ENCODE measurements at regions of chr17 and their contacts with region 1.

Region 1: DNA sequence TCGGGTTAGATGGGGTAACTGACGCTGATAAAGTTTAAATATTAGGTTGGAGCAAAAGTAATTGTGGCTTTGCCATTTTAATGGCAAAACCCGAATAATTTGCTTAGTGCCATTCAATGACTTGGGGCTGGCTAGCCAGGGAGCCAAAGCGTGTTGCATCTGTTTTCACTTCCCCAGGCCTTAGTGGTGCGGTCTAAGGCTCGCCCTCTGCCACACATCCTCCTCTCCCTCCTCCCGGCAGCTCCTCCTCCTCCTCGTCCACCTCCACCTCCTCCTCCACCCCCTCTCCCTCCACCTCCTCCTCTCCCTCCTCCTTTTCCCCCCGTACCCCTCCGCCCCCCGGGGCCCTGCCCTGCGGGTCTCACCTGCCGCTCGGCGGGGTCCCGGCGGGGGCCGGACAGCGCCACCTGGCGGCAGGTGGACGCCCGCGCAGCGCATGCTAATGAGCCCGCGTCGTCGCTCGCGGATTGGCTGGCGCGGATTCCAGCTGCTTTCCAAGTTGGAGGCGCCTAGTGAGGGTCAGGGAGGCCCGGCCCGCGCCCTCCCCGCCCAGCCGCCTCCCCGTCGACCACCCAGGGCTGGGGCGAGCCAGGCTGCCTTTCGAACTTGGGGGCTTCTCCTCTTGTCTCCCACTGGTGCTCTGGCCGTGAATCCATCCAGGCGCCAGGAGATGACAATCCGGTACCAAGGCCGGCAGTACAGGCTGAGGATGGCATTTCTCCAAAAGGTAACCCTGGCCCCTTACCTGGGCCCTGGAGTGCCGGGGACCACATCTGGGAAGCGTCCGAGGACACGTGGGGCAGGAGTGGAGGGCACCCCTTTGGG is 36.6 kb upstream of the RGS9 start:
- DNase-seq: peak; percentile 73
- H3K4me3 Mint-ChIP-seq: peak overlapping the region; percentile 66
- H3K27ac Mint-ChIP-seq: peak overlapping the region; percentile 68
- H3K4me1 Mint-ChIP-seq: peaks cover 29% of the 10 kb centered on the region
- H3K27me3 Mint-ChIP-seq: no peaks in the 10 kb centered on the region
- CTCF ChIP-seq: peak; percentile 95

Region 2: DNA sequence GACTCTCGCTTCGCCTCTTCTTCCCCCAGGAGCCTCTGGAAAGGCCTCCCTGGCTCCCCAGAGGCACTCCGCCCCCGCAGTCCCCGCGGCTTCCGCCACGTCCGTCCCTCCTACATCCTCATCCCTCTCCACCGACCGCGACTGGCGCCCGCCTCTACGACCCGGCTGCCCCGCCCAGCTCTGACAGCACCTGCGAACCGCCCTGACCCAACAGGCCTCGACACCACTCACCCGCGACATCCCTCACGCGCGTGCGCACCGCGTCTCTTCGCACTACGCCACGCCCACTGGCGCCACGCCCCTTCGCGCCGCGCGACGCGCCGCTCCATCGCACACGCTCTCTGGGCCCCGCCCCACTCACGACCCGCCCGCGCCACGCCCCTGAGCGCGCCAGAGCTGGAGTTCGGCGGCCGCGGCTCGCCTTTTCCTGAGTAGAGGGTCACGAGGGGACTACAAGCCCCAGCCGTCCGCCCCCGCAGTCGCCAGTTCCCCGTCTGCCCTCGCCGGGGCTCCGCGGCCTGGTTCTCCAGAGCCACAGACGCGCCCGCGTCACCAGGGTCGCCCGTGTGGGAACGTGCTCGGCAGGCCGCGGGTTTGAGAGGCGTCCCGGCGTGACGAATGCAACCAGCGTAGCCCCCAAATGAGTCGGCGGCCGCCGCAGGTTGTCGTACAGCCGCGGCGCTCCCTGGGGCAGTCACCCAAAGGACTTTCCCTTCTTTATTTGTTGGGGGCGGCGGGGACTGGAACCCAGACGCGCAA is 125.0 kb before region 1 on chr17:
- CTCF ChIA-PET with region 1: interaction called, 9 read pairs
- POLR2A ChIA-PET with region 1: interaction called, 34 read pairs
- intact Hi-C with region 1: no loop called
- DNase-seq: peak; percentile 93
- H3K4me3 Mint-ChIP-seq: peak overlapping the region; percentile 100
- H3K27ac Mint-ChIP-seq: peak overlapping the region; percentile 99
- H3K4me1 Mint-ChIP-seq: peaks cover 21% of the 10 kb centered on the region
- H3K27me3 Mint-ChIP-seq: no peaks in the 10 kb centered on the region
- CTCF ChIP-seq: no peak

Region 3: DNA sequence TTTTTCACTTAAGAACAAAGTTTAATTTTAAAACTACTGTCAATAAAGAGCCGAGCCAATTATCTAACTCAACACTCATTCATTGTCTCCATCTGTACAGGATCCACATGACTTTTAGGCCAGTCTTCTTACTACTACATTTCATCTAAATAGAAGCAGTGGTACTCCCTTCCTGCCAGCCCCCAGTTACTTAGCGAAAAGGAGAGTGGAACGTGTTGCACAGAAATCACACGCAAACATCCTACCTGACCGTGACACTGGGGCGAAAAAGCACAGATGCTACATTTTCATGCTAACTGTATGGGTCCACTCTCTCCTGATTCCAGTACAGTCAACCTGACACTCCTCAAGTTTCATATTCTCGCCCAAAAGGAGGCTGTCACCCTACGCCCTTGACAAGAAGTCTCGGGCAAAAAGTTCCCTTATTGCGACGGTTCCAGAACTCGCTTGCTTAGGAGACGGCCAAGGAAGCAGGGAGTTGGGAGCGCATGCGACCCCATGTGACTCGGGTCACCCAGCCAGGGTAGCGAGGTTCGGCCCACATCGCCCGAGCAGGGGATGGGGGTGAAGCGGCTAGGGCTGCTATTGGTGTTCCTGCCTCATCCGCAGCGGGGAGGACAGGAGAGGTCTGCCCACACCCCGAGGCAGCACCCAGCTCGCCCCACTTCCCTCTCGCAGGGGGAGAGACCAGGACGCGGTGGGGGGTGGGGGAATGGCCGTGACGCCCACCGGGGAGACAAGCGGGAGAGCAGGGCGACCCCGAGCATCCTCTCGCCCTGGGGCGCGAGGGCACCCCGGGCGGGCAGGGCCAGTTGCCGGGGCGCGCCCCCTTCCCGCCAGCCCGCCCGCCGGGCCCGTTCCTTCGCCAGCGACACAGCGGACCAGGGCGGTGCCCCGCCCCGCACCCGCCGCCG is 44.9 kb before region 1 on chr17:
- CTCF ChIA-PET with region 1: interaction called, 6 read pairs
- POLR2A ChIA-PET with region 1: interaction called, 256 read pairs
- intact Hi-C with region 1: loop called (anchors 2 kb)
- DNase-seq: peak; percentile 55
- H3K4me3 Mint-ChIP-seq: peak overlapping the region; percentile 89
- H3K27ac Mint-ChIP-seq: peak overlapping the region; percentile 72
- H3K4me1 Mint-ChIP-seq: peaks cover 31% of the 10 kb centered on the region
- H3K27me3 Mint-ChIP-seq: no peaks in the 10 kb centered on the region
- CTCF ChIP-seq: no peak

Region 4: DNA sequence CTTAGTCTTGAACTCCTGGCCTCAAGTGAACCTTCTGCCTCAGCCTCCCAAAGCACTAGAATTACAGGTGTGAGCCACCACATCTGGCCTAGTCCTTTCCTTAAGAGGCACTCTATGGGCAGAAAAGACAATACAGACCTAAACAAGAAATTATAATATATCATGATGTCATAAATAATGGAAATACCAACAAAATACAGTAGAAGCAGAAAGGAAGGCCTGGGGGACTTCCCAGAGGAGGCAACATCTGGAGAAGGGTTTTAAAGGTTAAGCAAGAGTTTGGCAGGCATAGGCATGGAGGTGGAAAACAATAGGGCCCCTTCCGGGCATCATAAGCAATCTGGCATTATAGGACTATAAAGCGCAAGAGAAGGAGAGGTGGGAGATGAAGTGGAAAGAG is 19.1 kb before region 1 on chr17:
- CTCF ChIA-PET with region 1: interaction called, 18 read pairs
- POLR2A ChIA-PET with region 1: interaction called, 4 read pairs
- intact Hi-C with region 1: no loop called
- DNase-seq: no peak
- H3K4me3 Mint-ChIP-seq: no peak overlapping the region
- H3K27ac Mint-ChIP-seq: no peak overlapping the region
- H3K4me1 Mint-ChIP-seq: no peaks in the 10 kb centered on the region
- H3K27me3 Mint-ChIP-seq: peaks cover 19% of the 10 kb centered on the region
- CTCF ChIP-seq: no peak

Region 5: DNA sequence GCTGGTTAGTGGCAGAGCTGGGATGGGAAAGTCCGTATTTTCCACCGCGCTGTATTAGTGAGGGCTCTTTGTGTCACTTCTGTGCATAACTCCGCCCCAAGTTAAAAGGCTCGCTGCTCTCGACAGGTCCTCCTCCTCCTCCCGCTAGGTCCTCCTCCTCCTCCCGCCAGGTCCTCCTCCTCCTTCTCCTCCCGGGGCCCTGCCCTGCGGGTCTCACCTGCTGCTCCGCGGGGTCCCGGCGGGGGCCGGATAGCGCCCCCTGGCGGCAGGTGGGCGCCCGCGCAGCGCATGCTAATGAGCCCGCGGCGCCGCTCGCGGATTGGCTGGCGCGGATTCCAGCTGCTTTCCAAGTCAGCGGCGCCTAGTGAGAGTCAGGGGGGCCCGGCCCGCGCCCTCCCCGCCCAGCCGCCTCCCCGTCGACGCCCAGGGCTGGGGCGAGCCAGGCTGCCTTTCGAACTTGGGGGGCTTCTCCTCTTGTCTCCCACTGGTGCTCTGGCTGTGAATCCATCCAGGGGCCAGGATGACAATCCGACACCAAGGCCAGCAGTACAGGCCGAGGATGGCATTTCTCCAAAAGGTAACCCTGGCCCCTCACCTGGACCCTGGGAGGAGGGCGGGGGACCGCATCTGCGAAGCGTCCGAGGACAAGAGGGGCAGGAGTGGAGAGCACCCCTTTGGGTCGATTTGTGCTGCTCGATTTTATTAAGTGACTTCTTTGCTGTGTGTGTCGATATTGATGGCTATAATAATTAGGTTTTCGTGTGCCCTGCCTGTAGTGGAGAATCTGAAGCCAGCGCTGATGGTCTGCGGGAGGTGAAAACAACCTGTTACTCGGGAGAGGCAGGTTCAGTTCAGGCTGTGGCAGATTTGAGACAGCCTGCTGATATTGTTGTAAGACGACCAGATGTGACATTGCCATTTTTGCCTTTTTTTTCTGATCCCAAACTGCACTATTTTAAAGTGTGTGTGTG is 36.8 kb after region 1 on chr17 and contains the start of gene RGS9:
- CTCF ChIA-PET with region 1: interaction called, 3 read pairs
- POLR2A ChIA-PET with region 1: interaction called, 22 read pairs
- intact Hi-C with region 1: loop called (anchors 2 kb)
- DNase-seq: peak; percentile 75
- H3K4me3 Mint-ChIP-seq: peak within 1 kb of the TSS; percentile 74
- H3K27ac Mint-ChIP-seq: no peak within 1 kb of the TSS
- H3K4me1 Mint-ChIP-seq: peaks cover 11% of the 10 kb centered on the region
- H3K27me3 Mint-ChIP-seq: peaks cover 31% of the 10 kb centered on the region
- CTCF ChIP-seq: peak; percentile 94
- total RNA-seq, gene RGS9: 0.49 and 0.61 TPM in 2 replicates